Prostate gland (tissue), 2 donors: ENCODE measurements at regions of chr2 and their contacts with region 1.

Region 1: DNA sequence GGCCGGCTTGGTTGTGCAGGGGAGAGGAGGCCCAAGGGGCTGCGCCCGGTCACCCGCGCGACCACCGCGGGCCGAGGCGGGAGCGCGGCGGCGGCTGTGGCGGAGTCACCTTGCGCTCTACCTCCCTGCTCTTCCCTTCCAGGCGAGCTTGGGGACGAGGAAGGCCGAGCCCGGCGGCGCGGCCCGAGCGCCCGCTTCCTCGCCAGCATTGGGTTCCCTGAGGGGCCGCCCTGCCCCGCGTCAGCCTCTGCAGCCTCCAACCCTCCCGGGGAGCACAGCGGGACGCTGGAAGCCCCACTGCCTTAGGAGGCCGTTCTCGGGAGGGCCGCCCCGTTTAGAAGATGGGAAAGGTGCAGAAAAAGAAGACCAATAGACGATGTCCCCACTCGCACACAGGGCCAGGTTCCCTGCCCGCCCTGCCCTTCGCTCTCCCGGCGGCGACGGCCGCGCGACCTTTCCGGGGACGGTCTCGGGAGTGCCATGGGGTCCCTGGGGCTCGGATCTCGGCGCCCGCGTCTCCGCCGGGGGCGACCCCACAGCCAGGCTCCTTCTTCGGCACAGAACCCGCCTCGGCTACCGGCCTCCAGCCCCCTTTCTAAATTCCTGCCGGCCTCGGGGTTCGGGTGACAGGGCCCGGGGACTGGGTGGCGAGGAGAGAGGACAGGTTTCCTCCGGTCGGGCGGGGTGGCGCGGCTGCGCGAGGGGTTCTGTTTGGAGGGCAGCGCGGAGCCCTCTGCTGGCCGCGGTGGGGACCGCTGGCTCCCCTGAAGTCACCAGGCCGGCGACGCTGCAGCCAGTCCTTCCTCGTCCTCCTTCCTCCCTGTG is 85.5 kb downstream of the HS6ST1 start:
- DNase-seq: peak; percentile 86
- H3K4me3 ChIP-seq: peak overlapping the region; percentile 41 to 57
- H3K27ac ChIP-seq: peak overlapping the region; percentile 73 to 79
- H3K4me1 ChIP-seq: no peaks in the 10 kb centered on the region
- H3K27me3 ChIP-seq: no peaks in the 10 kb centered on the region
- CTCF ChIP-seq: peak; percentile 69 to 92 (median 78)
- POLR2A ChIP-seq: peak; percentile 52

Region 2: DNA sequence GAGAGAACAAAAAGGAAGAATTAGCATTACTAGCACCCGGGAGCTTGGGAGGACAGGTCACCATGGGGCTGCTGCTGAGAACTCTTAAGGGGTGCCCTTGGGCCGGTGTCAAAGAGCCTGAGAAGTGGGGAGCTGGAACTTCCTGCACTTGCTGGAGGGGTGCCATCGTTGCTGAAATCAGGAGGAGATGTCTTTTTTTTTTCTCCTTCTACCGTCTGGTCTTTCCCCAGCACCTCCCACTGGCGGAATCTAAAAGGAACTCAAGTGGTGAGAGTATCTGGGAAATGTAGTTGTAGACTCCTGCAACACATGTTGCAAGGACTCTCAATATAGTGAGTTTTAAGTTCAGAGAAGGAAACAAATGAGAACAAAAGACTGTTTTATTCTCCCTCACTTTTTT is 341.4 kb before region 1 on chr2:
- intact Hi-C with region 1: loop called (anchors 10 kb)
- DNase-seq: no peak
- H3K4me3 ChIP-seq: no peak overlapping the region
- H3K27ac ChIP-seq: no peak overlapping the region
- H3K4me1 ChIP-seq: peaks cover 3% of the 10 kb centered on the region
- H3K27me3 ChIP-seq: no peaks in the 10 kb centered on the region
- CTCF ChIP-seq: no peak
- POLR2A ChIP-seq: no peak

Region 3: DNA sequence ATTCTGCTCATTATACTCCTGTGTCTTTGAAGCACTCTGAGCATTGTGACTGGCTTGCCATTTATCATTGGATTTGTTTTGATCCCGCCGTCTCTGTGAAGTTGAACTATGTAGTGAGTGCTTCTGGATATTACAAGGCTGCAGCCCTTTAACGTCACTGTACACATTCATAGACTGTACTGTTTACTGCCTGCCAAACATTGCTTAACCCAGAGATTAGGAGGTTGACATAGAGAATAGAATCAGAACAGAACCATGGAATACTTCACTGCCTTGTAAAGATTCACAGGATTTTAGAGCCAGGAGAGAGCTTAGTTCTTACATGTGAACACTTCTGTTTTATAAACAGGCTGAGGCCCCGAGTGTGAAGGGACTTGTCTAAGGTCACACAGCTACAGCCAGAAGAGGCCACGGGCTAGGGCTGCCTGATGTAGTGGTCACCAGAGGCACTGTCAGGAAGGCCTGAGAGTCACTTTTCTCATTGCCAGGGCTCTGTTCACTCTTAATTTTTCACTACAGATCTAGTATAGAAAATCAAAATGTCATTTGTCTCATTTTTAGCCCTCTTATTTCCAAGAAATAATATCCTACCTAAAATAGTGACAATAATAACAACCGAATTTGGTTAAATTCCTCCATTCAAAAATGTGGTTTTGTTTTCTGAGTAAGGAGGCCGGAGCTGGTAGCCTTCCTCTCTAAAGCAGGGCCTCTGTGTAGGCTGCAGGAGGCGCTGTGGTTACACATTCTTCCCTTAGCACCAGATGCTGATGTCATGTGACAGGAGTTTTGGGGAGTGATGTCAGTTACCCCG is 54.3 kb before region 1 on chr2:
- intact Hi-C with region 1: loop called (anchors 2 kb)
- DNase-seq: peak; percentile 47
- H3K4me3 ChIP-seq: no peak overlapping the region
- H3K27ac ChIP-seq: no peak overlapping the region
- H3K4me1 ChIP-seq: no peaks in the 10 kb centered on the region
- H3K27me3 ChIP-seq: no peaks in the 10 kb centered on the region
- CTCF ChIP-seq: peak in 3 of 4 experiments; percentile 44 to 83 (median 65)
- POLR2A ChIP-seq: no peak

Region 4: GRCh38 chr2:128305159-128306087 is 72.2 kb after region 1 on chr2:
- intact Hi-C with region 1: loop called (anchors 10 kb)
- DNase-seq: peak; percentile 96
- H3K4me3 ChIP-seq: no peak overlapping the region
- H3K27ac ChIP-seq: peak overlapping the region; percentile 81 to 83
- H3K4me1 ChIP-seq: peaks cover 30% of the 10 kb centered on the region
- H3K27me3 ChIP-seq: no peaks in the 10 kb centered on the region
- CTCF ChIP-seq: peak in 2 of 4 experiments; percentile 21 to 22
- POLR2A ChIP-seq: peak; percentile 25

Region 5: DNA sequence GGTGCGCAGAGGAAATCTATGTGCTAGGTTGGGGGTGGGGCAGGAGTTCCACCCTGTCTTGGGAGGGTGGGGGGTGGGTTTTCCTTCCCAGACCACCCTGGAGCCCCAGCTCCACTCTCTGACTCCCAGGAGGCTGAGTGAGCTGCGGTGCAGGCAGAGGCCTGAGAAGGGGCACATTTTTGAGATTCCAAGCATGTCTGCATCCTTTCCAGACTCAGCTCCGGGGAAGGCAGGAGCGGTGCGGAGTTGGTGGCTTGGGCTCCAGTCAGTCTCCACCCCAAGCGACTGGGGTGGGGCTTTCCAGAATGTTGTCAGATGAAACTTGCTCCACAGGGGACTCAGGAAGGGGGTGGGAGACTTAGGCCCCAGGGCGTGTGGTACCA is 129.7 kb after region 1 on chr2:
- intact Hi-C with region 1: no loop called
- DNase-seq: peak; percentile 55
- H3K4me3 ChIP-seq: no peak overlapping the region
- H3K27ac ChIP-seq: no peak overlapping the region
- H3K4me1 ChIP-seq: no peaks in the 10 kb centered on the region
- H3K27me3 ChIP-seq: no peaks in the 10 kb centered on the region
- CTCF ChIP-seq: no peak
- POLR2A ChIP-seq: no peak

Region 6: DNA sequence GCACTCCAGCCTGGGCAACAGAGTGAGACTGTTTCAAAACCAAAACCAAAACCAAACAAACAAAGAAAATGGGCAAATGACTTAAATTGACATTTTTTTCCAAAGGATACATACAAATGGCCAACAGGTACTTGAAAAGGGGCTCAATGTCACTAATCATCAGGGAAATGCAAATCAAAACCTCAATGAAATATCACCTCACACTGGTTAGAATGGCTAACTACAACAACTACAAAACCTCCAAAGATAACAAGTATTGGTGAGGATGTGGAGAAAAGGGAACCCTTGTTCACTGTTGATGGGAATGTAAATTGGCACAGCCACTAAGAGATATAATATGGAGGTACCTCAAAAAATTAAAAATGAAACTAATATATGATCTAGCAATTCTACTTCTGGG is 298.7 kb after region 1 on chr2:
- intact Hi-C with region 1: no loop called
- DNase-seq: no peak
- H3K4me3 ChIP-seq: no peak overlapping the region
- H3K27ac ChIP-seq: no peak overlapping the region
- H3K4me1 ChIP-seq: no peaks in the 10 kb centered on the region
- H3K27me3 ChIP-seq: no peaks in the 10 kb centered on the region
- CTCF ChIP-seq: peak in 2 of 4 experiments; percentile 36 to 41
- POLR2A ChIP-seq: no peak